Activated T-helper 1 cell treated with anti-CD3 and anti-CD28 coated beads, Interleukin-12 subunit alpha, Interleukin-12 subunit beta, Interleukin-2, Interleukin-4 antibody, amounts not matched to agents 30 ng/mL and 10 ng/mL and 1 ng/mL, durations not matched to agents 14 hours and 24 hours and 36 hours (primary cell): ENCODE measurements at regions of chr4 and their contacts with region 1.

Region 1: DNA sequence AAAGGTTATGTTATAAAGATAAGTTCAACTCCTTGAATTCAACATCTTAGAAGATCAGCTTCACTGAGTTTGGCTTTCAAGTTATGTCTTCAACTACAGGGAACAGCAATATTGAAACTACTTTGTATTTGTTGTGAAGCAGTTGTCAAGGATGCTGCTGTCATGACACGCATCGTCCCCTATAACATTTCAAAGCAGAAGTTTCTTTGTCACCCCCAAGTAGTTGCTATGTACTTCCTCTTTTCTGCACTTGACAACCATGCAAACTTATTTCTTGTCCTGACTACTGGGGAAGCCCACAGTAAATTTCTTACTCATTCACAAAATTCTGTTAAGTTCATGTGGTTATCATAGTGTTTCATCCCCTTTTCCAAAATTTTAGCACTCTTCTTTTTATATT is 14.3 kb downstream of the ANTXR2 start:
- DNase-seq: peak; percentile 52
- H3K4me3 Mint-ChIP-seq: peak overlapping the region; percentile 82
- H3K27ac Mint-ChIP-seq: peak overlapping the region; percentile 99
- H3K4me1 Mint-ChIP-seq: peaks cover 73% of the 10 kb centered on the region
- H3K27me3 Mint-ChIP-seq: no peaks in the 10 kb centered on the region

Region 2: GRCh38 chr4:78938868-78939666 is 1119.7 kb before region 1 on chr4 and contains the start of gene PAQR3:
- intact Hi-C with region 1: loop called (anchors 5 kb)
- DNase-seq: peak; percentile 82
- H3K4me3 Mint-ChIP-seq: peak within 1 kb of the TSS; percentile 97
- H3K27ac Mint-ChIP-seq: peak within 1 kb of the TSS; percentile 88
- H3K4me1 Mint-ChIP-seq: peaks cover 47% of the 10 kb centered on the region
- H3K27me3 Mint-ChIP-seq: peaks cover 16% of the 10 kb centered on the region
- total RNA-seq, gene PAQR3: 19.6 and 19.8 TPM in 2 replicates

Region 3: DNA sequence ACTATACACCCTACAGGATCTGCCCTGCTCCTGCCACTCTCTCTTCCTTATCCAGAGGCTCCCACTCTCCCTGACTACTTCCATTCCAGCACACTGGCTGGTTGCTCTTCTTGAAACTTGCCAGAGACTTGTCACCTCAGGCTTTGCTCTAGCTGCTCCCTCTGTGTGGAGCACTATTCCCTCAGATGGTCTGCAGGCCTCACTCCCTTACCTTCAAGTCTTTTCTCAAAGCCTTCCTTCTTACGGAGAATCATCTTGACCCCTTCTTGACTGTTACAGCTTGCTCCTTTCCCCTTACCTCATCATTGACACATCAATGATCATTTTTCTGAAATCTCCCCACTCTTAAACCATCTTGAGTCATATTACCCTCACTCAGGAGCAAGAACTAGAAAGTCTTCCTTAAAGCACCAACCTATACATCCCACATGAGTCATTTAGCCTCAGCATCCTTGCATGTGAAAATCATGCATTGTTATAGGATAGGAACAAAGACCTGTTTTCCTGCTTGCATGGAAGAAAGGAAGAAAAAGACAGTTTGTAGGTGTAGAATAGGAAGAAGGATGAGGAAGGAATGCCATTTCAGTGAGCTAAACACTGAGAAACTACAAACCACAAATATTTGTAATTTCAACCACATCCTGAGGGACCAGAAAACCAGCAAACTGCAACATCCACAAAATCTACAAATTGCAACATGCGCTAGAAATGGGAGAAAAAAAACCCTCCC is 41.5 kb before region 1 on chr4:
- intact Hi-C with region 1: loop called (anchors 2 kb)
- DNase-seq: no peak
- H3K4me3 Mint-ChIP-seq: no peak overlapping the region
- H3K27ac Mint-ChIP-seq: peak overlapping the region; percentile 57
- H3K4me1 Mint-ChIP-seq: peaks cover 19% of the 10 kb centered on the region
- H3K27me3 Mint-ChIP-seq: no peaks in the 10 kb centered on the region

Region 4: DNA sequence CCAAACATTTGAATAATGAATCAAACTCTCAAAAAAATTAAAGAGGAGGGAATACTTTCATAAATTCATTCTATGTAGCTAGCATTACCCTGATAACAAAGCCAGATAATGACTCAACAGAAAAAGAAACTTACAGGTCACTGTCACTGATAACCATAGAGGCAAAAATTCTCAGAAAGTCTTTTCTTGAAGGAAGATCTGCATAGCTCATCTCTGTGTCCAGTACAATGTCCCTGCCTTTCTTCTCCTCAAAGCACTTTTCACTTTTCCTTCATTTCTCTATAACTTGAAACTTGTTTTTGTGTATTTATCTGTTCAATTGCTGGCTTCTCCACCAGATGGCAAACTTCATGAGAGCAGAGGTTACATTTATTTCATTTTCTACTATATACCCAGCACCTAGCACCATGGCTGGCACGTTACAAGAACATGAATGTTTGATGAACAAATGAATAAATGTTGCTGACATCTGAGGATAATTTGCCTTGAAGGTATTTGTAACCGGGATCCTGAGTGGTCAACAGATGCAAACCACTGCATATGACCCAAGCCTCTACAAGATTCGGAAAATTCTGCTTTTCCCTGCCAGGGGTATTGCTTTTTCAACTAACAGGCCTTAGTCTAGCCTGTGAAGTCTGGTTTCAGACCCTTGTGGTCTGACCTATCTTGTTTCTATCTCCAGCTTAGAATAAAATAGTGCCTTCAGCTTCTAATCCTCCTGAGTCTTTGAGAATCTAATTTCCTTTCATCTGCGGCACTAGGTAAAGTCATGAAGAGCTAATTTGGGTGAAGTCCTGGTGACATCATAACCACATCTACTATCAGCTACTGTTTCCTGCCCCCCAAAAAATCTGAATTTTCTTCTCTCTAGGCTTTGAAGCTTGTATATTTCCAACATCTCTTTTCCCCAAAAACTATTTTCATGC is 66.8 kb after region 1 on chr4:
- intact Hi-C with region 1: loop called (anchors 1 kb)
- DNase-seq: peak; percentile 17
- H3K4me3 Mint-ChIP-seq: peak overlapping the region; percentile 71
- H3K27ac Mint-ChIP-seq: peak overlapping the region; percentile 92
- H3K4me1 Mint-ChIP-seq: peaks cover 68% of the 10 kb centered on the region
- H3K27me3 Mint-ChIP-seq: no peaks in the 10 kb centered on the region

Region 5: GRCh38 chr4:80153874-80154544 is 95.3 kb after region 1 on chr4:
- intact Hi-C with region 1: loop called (anchors 1 kb)
- DNase-seq: no peak
- H3K4me3 Mint-ChIP-seq: peak overlapping the region; percentile 21
- H3K27ac Mint-ChIP-seq: peak overlapping the region; percentile 90
- H3K4me1 Mint-ChIP-seq: peaks cover 27% of the 10 kb centered on the region
- H3K27me3 Mint-ChIP-seq: peaks cover 3% of the 10 kb centered on the region

Region 6: DNA sequence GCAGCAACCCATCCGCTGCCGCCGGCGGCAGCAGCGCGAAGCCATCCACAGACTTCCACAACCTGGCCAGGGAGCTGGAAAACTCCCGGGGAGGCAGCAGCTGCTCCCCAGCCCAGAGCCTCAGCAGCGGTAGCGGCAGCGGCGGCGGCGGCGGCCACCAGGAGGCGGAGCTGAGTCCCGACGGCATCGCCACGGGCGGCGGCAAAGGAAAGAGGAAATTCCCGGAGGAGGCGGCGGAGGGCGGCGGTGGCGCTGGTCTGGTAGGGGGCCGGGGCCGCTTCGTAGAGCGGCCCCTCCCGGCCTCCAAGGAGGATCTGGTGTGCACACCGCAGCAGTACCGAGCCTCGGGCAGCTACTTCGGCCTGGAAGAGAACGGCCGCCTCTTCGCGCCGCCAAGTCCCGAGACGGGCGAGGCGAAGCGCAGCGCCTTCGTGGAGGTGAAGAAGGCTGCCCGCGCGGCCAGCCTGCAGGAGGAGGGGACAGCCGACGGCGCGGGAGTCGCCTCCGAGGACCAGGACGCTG is 143.5 kb after region 1 on chr4:
- intact Hi-C with region 1: loop called (anchors 5 kb)
- DNase-seq: peak; percentile 79
- H3K4me3 Mint-ChIP-seq: peak overlapping the region; percentile 80
- H3K27ac Mint-ChIP-seq: peak overlapping the region; percentile 73
- H3K4me1 Mint-ChIP-seq: peaks cover 29% of the 10 kb centered on the region
- H3K27me3 Mint-ChIP-seq: peaks cover 21% of the 10 kb centered on the region